ENCODE measurements at regions of chr6 and their contacts with region 1.

Region 1: GRCh38 chr6:26270903-26271667 is 93.9 kb upstream of the BTN3A2 start:
- DNase-seq: peak; percentile 49 to 90 (median 74)
- ATAC-seq: peak; percentile 20 to 35 (median 32)
- H3K4me3 ChIP-seq: peak overlapping the region; percentile 71 to 83
- H3K4me3 Mint-ChIP-seq: no peak overlapping the region
- H3K27ac ChIP-seq: peak overlapping the region; percentile 89
- H3K27ac Mint-ChIP-seq: peak overlapping the region in 1 of 2 donors; percentile 58
- H3K4me1 ChIP-seq: peaks cover 18 to 31% of the 10 kb centered on the region in 2 experiments
- H3K4me1 Mint-ChIP-seq: peaks cover 20 to 29% (median 21%) of the 10 kb centered on the region in 3 donors
- H3K27me3 ChIP-seq: no peaks in the 10 kb centered on the region
- H3K27me3 Mint-ChIP-seq: no peaks in the 10 kb centered on the region

Region 2: GRCh38 chr6:26025894-26026832 is 244.9 kb before region 1 on chr6:
- CTCF ChIA-PET with region 1: interaction called in 1 of 2 experiments, 3 read pairs
- POLR2A ChIA-PET with region 1: interaction called in 1 of 2 experiments, 12 read pairs
- DNase-seq: peak; percentile 70 to 98 (median 96)
- ATAC-seq: peak; percentile 33 to 46 (median 36)
- H3K4me3 ChIP-seq: peak overlapping the region; percentile 63 to 88
- H3K4me3 Mint-ChIP-seq: peak overlapping the region; percentile 82 to 93 (median 92)
- H3K27ac ChIP-seq: peak overlapping the region; percentile 93
- H3K27ac Mint-ChIP-seq: peak overlapping the region; percentile 93 to 99
- H3K4me1 ChIP-seq: peaks cover 22 to 24% of the 10 kb centered on the region in 2 experiments
- H3K4me1 Mint-ChIP-seq: peaks cover 43 to 53% (median 44%) of the 10 kb centered on the region in 3 donors
- H3K27me3 ChIP-seq: no peaks in the 10 kb centered on the region
- H3K27me3 Mint-ChIP-seq: peaks cover 0 to 2% of the 10 kb centered on the region in 2 donors

Region 3: DNA sequence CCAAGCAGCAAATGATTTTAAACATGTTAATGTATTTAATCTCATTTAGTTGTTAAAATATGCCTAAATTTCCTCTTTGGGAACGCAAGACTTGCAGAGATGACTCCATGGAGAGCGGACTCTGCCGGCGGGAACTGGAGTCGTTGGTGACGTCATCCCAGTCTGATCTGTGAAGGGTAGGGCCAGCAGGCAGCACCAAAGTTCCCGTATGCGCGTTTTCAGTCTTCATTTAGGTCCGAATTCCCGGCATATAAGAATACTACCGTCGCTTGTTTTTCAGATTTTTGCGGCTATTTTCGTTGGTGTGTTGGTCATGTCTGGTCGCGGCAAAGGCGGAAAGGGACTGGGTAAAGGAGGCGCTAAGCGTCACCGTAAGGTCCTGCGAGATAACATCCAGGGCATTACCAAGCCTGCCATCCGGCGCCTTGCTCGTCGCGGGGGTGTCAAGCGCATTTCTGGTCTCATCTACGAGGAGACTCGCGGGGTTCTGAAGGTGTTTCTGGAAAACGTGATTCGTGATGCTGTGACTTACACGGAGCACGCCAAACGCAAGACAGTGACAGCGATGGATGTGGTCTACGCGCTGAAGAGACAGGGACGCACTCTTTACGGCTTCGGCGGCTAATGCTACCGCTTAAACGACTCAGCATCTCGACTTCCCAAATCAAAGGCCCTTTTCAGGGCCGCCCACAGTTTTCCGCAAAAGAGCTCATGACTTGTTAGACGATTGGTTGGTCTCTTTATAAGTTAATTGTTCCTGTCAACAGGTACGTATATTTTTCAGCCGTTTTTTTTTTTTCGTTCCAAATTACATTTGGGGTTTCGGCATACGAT is 66.5 kb before region 1 on chr6:
- CTCF ChIA-PET with region 1: interaction called in 1 of 2 experiments, 9 read pairs
- POLR2A ChIA-PET with region 1: interaction called, 13 to 71 read pairs
- DNase-seq: peak; percentile 73 to 96 (median 82)
- ATAC-seq: peak; percentile 63 to 70 (median 68)
- H3K4me3 ChIP-seq: peak overlapping the region; percentile 73 to 98
- H3K4me3 Mint-ChIP-seq: no peak overlapping the region
- H3K27ac ChIP-seq: peak overlapping the region; percentile 93
- H3K27ac Mint-ChIP-seq: no peak overlapping the region
- H3K4me1 ChIP-seq: peaks cover 23 to 37% of the 10 kb centered on the region in 2 experiments
- H3K4me1 Mint-ChIP-seq: peaks cover 17 to 28% (median 24%) of the 10 kb centered on the region in 3 donors
- H3K27me3 ChIP-seq: no peaks in the 10 kb centered on the region
- H3K27me3 Mint-ChIP-seq: no peaks in the 10 kb centered on the region

Region 4: DNA sequence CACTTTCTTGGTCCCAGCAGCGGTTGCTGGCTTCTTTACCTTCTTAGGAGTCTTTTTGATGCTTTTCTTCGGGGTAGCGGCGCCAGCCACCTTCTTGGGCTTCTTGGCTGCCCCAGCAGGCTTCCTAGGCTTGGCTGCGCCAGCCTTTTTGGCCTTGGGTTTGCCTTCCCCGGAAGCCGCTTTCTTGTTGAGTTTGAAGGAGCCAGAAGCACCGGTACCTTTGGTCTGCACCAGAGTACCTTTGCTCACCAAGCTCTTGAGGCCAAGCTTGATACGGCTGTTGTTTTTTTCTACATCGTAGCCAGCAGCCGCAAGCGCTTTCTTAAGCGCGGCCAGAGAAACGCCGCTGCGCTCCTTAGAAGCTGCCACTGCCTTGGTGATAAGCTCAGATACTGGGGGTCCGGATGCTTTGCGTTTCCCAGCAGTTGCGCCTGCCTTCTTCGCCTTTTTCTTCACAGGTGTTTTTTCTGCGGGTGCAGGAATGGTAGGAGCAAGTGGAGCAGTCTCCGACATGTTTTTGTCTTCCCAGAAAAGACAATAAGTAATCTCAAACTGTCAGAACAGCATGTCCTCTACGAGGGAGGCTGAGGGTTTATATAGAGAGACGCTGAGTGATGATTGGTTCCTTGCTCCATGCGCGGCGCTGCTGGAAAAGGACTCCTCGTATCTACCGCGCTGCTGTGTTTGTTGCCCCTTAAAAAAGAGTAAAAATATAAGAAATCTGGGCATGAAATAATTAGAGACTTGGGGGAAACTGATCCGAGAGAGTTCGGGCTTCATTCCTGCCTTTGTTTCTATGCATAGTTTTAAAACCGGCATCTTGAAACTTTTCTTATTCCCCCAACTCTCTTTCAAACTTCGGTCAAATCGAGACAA is 36.4 kb before region 1 on chr6:
- CTCF ChIA-PET with region 1: interaction called, 8 to 9 read pairs
- POLR2A ChIA-PET with region 1: interaction called, 4 to 61 read pairs
- DNase-seq: peak; percentile 52 to 83 (median 66)
- ATAC-seq: peak; percentile 66 to 78 (median 76)
- H3K4me3 ChIP-seq: peak overlapping the region; percentile 88 to 98
- H3K4me3 Mint-ChIP-seq: peak overlapping the region; percentile 87 to 96 (median 88)
- H3K27ac ChIP-seq: peak overlapping the region; percentile 95
- H3K27ac Mint-ChIP-seq: peak overlapping the region; percentile 96 to 100
- H3K4me1 ChIP-seq: peaks cover 13 to 19% of the 10 kb centered on the region in 2 experiments
- H3K4me1 Mint-ChIP-seq: peaks cover 32 to 39% (median 36%) of the 10 kb centered on the region in 3 donors
- H3K27me3 ChIP-seq: no peaks in the 10 kb centered on the region
- H3K27me3 Mint-ChIP-seq: no peaks in the 10 kb centered on the region

Region 5: GRCh38 chr6:26258200-26258977 is 12.7 kb before region 1 on chr6:
- CTCF ChIA-PET with region 1: interaction called in 1 of 2 experiments, 3 read pairs
- POLR2A ChIA-PET with region 1: interaction called, 11 to 15 read pairs
- DNase-seq: no peak
- ATAC-seq: no peak
- H3K4me3 ChIP-seq: no peak overlapping the region
- H3K4me3 Mint-ChIP-seq: no peak overlapping the region
- H3K27ac ChIP-seq: no peak overlapping the region
- H3K27ac Mint-ChIP-seq: no peak overlapping the region
- H3K4me1 ChIP-seq: peaks cover 4 to 6% of the 10 kb centered on the region in 2 experiments
- H3K4me1 Mint-ChIP-seq: peaks cover 5 to 20% (median 6%) of the 10 kb centered on the region in 3 donors
- H3K27me3 ChIP-seq: no peaks in the 10 kb centered on the region
- H3K27me3 Mint-ChIP-seq: no peaks in the 10 kb centered on the region

Region 6: GRCh38 chr6:26553635-26554446 is 282.8 kb after region 1 on chr6:
- CTCF ChIA-PET with region 1: interaction called in 1 of 2 experiments, 4 read pairs
- POLR2A ChIA-PET with region 1: interaction called in 1 of 2 experiments, 10 read pairs
- DNase-seq: peak in 34 of 35 experiments; percentile 32 to 89 (median 62)
- ATAC-seq: peak; percentile 32 to 56 (median 50)
- H3K4me3 ChIP-seq: peak overlapping the region; percentile 62 to 79
- H3K4me3 Mint-ChIP-seq: no peak overlapping the region
- H3K27ac ChIP-seq: peak overlapping the region; percentile 47
- H3K27ac Mint-ChIP-seq: no peak overlapping the region
- H3K4me1 ChIP-seq: peaks cover 23 to 27% of the 10 kb centered on the region in 2 experiments
- H3K4me1 Mint-ChIP-seq: peaks cover 18 to 24% (median 22%) of the 10 kb centered on the region in 3 donors
- H3K27me3 ChIP-seq: no peaks in the 10 kb centered on the region
- H3K27me3 Mint-ChIP-seq: peaks cover 0 to 1% of the 10 kb centered on the region in 2 donors

Measured in T-cell (primary cell).